OCI-LY7 (cell line): ENCODE measurements at regions of chr11 and their contacts with region 1.

Region 1: GRCh38 chr11:2287091-2287490 is 14.6 kb downstream of the C11orf21 start:
- DNase-seq: no peak
- H3K4me3 ChIP-seq: no peak overlapping the region
- H3K27ac ChIP-seq: no peak overlapping the region
- H3K4me1 ChIP-seq: no peaks in the 10 kb centered on the region
- CTCF ChIP-seq: no peak

Region 2: DNA sequence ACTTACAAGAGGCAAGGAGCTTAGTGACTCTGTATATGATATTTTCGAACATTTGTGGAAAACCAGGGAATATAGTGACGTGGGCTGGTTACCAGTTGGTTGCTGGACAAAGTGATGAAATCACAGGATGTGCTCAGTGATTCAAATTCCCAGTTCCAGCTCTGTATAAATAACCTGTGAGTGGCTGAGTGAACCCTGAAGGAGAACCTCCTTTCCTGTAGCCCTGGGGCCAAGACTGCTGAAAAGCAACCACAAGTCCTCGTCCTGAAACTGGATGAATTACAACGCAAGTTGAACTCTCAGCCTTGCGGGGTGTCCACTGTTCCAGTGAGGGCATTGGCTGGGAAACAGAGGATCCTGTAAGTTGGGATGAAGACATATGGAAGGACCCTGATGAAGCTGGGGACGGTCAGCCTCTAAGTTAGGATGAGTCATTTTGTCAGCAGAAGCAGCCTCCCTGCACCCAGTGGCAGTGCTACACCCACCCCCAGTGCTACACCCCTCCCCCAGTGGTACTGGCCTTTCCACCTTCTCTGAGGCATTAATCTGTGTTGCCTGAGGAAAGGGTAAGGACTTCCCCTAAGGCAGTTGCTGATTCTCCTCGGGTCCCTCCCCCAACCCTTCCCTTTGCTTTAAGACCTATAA is 68.0 kb after region 1 on chr11:
- CTCF ChIA-PET with region 1: no interaction called
- POLR2A ChIA-PET with region 1: no interaction called
- intact Hi-C with region 1: loop called (anchors 10 kb)
- DNase-seq: no peak
- H3K4me3 ChIP-seq: no peak overlapping the region
- H3K27ac ChIP-seq: no peak overlapping the region
- H3K4me1 ChIP-seq: no peaks in the 10 kb centered on the region
- CTCF ChIP-seq: no peak